MCF 10A (cell line): ENCODE measurements at regions of chr11 and their contacts with region 1.

Region 1: GRCh38 chr11:44936525-44936924 is 14.2 kb downstream of the TP53I11 start:
- DNase-seq: peak; percentile 77
- H3K4me3 Mint-ChIP-seq: no peak overlapping the region
- H3K27ac Mint-ChIP-seq: no peak overlapping the region
- H3K4me1 Mint-ChIP-seq: no peaks in the 10 kb centered on the region
- H3K27me3 Mint-ChIP-seq: no peaks in the 10 kb centered on the region
- CTCF ChIP-seq: peak; percentile 89

Region 2: DNA sequence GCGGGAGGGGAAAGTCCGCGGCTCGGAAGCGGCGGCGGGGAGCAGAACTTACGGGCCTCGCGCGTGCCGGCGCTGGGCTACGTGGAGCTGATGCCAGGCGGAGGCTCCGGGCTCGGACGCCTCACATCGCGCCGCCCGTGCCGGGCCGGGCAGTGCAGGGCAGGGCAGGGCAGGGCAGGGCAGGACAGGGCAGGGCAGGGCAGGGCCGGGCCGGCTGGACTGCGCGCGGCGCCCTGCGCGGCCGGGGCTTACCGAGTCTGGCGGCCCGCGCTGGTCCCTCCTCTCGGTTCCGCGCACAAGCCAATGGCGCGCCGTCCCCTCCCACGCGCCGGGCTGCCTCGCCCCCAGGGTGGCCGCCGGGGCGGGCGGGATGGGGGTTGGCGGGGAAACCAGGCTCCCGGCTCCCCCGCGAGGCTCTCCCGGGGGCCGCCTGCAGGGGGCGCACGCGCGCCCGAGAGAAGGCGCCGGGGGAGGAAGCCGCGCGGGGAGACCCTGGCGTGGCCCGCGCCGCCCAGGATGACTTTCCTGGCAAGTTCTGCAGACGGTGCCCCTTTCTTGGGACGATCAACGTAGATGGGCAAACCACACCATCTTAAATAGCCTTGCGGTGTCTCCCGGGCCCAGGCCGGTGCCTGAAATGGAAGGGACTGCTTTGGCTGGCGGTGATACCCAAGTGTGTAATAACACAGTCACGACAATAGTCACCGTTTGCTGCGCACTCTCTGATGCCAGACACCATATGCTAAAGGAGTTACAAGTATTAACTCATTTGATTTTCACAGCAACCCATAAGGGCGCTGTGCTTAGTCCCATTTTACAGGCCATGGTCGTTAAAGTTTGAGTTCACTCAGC is 14.3 kb after region 1 on chr11 and contains the start of gene TP53I11:
- CTCF ChIA-PET with region 1: interaction called, 36 read pairs
- POLR2A ChIA-PET with region 1: interaction called, 3 read pairs
- intact Hi-C with region 1: no loop called
- DNase-seq: peak; percentile 51
- H3K4me3 Mint-ChIP-seq: peak within 1 kb of the TSS; percentile 68
- H3K27ac Mint-ChIP-seq: no peak within 1 kb of the TSS
- H3K4me1 Mint-ChIP-seq: peaks cover 9% of the 10 kb centered on the region
- H3K27me3 Mint-ChIP-seq: no peaks in the 10 kb centered on the region
- CTCF ChIP-seq: peak; percentile 83
- total RNA-seq, gene TP53I11: 14.8 and 17.7 TPM in 2 replicates

Region 3: GRCh38 chr11:44960200-44960845 is 23.8 kb after region 1 on chr11:
- CTCF ChIA-PET with region 1: interaction called, 14 read pairs
- POLR2A ChIA-PET with region 1: interaction called, 3 read pairs
- intact Hi-C with region 1: no loop called
- DNase-seq: no peak
- H3K4me3 Mint-ChIP-seq: no peak overlapping the region
- H3K27ac Mint-ChIP-seq: no peak overlapping the region
- H3K4me1 Mint-ChIP-seq: peaks cover 4% of the 10 kb centered on the region
- H3K27me3 Mint-ChIP-seq: no peaks in the 10 kb centered on the region
- CTCF ChIP-seq: no peak

Region 4: GRCh38 chr11:44973632-44974401 is 37.3 kb after region 1 on chr11:
- CTCF ChIA-PET with region 1: no interaction called
- POLR2A ChIA-PET with region 1: no interaction called
- intact Hi-C with region 1: no loop called
- DNase-seq: no peak
- H3K4me3 Mint-ChIP-seq: no peak overlapping the region
- H3K27ac Mint-ChIP-seq: no peak overlapping the region
- H3K4me1 Mint-ChIP-seq: no peaks in the 10 kb centered on the region
- H3K27me3 Mint-ChIP-seq: no peaks in the 10 kb centered on the region
- CTCF ChIP-seq: no peak

Region 5: DNA sequence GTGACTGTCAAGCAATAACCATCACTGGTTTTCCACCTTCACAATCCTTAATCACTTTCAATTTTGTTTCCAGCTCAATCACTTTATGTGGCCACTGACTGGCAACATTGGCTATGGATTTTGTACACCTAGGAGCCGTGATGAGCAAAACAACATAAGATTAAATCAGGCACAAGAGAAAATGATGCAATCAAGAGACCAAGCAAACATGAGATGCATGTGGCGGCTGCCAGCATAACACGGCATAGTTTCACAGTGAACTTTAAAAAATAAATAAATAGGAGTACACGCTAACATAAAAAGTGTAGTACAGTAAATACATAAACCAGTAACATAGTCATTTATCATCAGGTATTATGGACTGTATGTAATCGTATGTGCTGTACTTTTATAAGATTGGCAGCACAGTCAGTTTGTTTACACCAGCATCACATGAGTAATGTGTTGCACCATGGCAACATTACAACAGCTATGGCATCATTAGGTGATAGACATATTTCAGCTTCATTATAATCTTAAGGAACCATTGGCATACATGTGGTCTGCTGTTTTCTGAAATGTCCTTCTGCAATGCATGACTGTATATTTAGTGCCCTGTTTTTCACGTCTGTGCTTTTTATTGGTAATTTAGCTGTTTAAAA is 126.6 kb after region 1 on chr11:
- CTCF ChIA-PET with region 1: interaction called, 12 read pairs
- POLR2A ChIA-PET with region 1: no interaction called
- intact Hi-C with region 1: no loop called
- DNase-seq: peak; percentile 25
- H3K4me3 Mint-ChIP-seq: no peak overlapping the region
- H3K27ac Mint-ChIP-seq: no peak overlapping the region
- H3K4me1 Mint-ChIP-seq: peaks cover 5% of the 10 kb centered on the region
- H3K27me3 Mint-ChIP-seq: no peaks in the 10 kb centered on the region
- CTCF ChIP-seq: no peak

Region 6: GRCh38 chr11:45097721-45098493 is 161.4 kb after region 1 on chr11:
- CTCF ChIA-PET with region 1: interaction called, 1,181 read pairs
- POLR2A ChIA-PET with region 1: interaction called, 29 read pairs
- intact Hi-C with region 1: loop called (anchors 1 kb)
- DNase-seq: peak; percentile 80
- H3K4me3 Mint-ChIP-seq: no peak overlapping the region
- H3K27ac Mint-ChIP-seq: no peak overlapping the region
- H3K4me1 Mint-ChIP-seq: peaks cover 42% of the 10 kb centered on the region
- H3K27me3 Mint-ChIP-seq: no peaks in the 10 kb centered on the region
- CTCF ChIP-seq: no peak

Region 7: DNA sequence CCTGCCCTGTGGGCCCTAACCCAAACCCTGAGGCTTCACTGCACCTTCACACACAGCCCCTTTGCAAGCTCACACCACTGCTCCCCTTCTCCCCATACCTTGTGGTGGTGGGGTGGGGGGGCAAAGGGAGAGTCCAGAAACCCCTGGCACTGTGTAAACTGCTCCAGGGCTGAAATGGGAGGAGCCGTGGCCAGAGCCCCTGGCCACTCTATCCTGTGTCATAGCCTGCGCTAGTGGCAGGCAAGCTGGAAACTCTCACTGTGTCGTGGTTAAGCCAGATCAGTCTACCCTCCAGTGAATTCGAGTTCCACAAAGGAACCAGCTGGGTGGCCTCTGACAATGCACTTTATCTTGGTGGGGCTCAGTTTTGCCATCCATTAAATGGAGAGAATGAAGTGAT is 358.0 kb after region 1 on chr11:
- CTCF ChIA-PET with region 1: interaction called, 5 read pairs
- POLR2A ChIA-PET with region 1: no interaction called
- intact Hi-C with region 1: loop called (anchors 5 kb)
- DNase-seq: no peak
- H3K4me3 Mint-ChIP-seq: no peak overlapping the region
- H3K27ac Mint-ChIP-seq: no peak overlapping the region
- H3K4me1 Mint-ChIP-seq: peaks cover 3% of the 10 kb centered on the region
- H3K27me3 Mint-ChIP-seq: peaks cover 15% of the 10 kb centered on the region
- CTCF ChIP-seq: no peak